Heart right ventricle (tissue), 16 donors: ENCODE measurements at regions of chr3 and their contacts with region 1.

Region 1: GRCh38 chr3:189570916-189571315 is 60.3 kb upstream of the TP63 start:
- DNase-seq: no peak
- ATAC-seq: no peak
- H3K4me3 ChIP-seq: no peak overlapping the region
- H3K27ac ChIP-seq: no peak overlapping the region
- H3K4me1 ChIP-seq: no peaks in the 10 kb centered on the region
- H3K27me3 ChIP-seq: no peaks in the 10 kb centered on the region
- CTCF ChIP-seq: no peak

Region 2: GRCh38 chr3:188760408-188760807 is 810.5 kb before region 1 on chr3:
- intact Hi-C with region 1: loop called in 1 of 10 experiments (anchors 10 kb)
- DNase-seq: no peak
- ATAC-seq: no peak
- H3K4me3 ChIP-seq: no peak overlapping the region
- H3K27ac ChIP-seq: no peak overlapping the region
- H3K4me1 ChIP-seq: peaks cover 0 to 13% (median 11%) of the 10 kb centered on the region in 9 donors
- H3K27me3 ChIP-seq: no peaks in the 10 kb centered on the region
- CTCF ChIP-seq: no peak

Region 3: GRCh38 chr3:189502676-189503257 is 68.1 kb before region 1 on chr3:
- intact Hi-C with region 1: no loop called
- DNase-seq: no peak
- ATAC-seq: no peak
- H3K4me3 ChIP-seq: no peak overlapping the region
- H3K27ac ChIP-seq: no peak overlapping the region
- H3K4me1 ChIP-seq: no peaks in the 10 kb centered on the region
- H3K27me3 ChIP-seq: no peaks in the 10 kb centered on the region
- CTCF ChIP-seq: no peak